ENCODE measurements at regions of chr11 and their contacts with region 1.

Region 1: GRCh38 chr11:45289369-45289768 is 3.2 kb upstream of the SYT13 start:
- DNase-seq: no peak
- H3K4me3 Mint-ChIP-seq: no peak overlapping the region
- H3K27ac Mint-ChIP-seq: no peak overlapping the region
- H3K4me1 Mint-ChIP-seq: no peaks in the 10 kb centered on the region
- H3K27me3 Mint-ChIP-seq: peaks cover 56% of the 10 kb centered on the region

Region 2: GRCh38 chr11:44936525-44936924 is 352.8 kb before region 1 on chr11:
- intact Hi-C with region 1: loop called (anchors 1 kb)
- DNase-seq: peak; percentile 70
- H3K4me3 Mint-ChIP-seq: no peak overlapping the region
- H3K27ac Mint-ChIP-seq: no peak overlapping the region
- H3K4me1 Mint-ChIP-seq: no peaks in the 10 kb centered on the region
- H3K27me3 Mint-ChIP-seq: peaks cover 5% of the 10 kb centered on the region

Region 3: GRCh38 chr11:45110562-45110961 is 178.8 kb before region 1 on chr11:
- intact Hi-C with region 1: loop called (anchors 1 kb)
- DNase-seq: no peak
- H3K4me3 Mint-ChIP-seq: no peak overlapping the region
- H3K27ac Mint-ChIP-seq: no peak overlapping the region
- H3K4me1 Mint-ChIP-seq: no peaks in the 10 kb centered on the region
- H3K27me3 Mint-ChIP-seq: peaks cover 27% of the 10 kb centered on the region

Region 4: GRCh38 chr11:45252134-45252855 is 37.1 kb before region 1 on chr11:
- intact Hi-C with region 1: loop called (anchors 2 kb)
- DNase-seq: no peak
- H3K4me3 Mint-ChIP-seq: no peak overlapping the region
- H3K27ac Mint-ChIP-seq: no peak overlapping the region
- H3K4me1 Mint-ChIP-seq: no peaks in the 10 kb centered on the region
- H3K27me3 Mint-ChIP-seq: peaks cover 2% of the 10 kb centered on the region